CD8-positive, alpha-beta memory T cell (primary cell): ENCODE measurements at regions of chr17 and their contacts with region 1.

Region 1: GRCh38 chr17:7021993-7022778 is 664 bp upstream of the BCL6B start:
- DNase-seq: peak; percentile 71 to 81 (median 74)
- H3K4me3 ChIP-seq: peak overlapping the region; percentile 42
- H3K4me3 Mint-ChIP-seq: peak overlapping the region; percentile 37 to 75 (median 57)
- H3K27ac ChIP-seq: no peak overlapping the region
- H3K27ac Mint-ChIP-seq: peak overlapping the region; percentile 19 to 95 (median 88)
- H3K4me1 ChIP-seq: peaks cover 33% of the 10 kb centered on the region
- H3K4me1 Mint-ChIP-seq: peaks cover 45 to 53% (median 47%) of the 10 kb centered on the region in 3 donors
- H3K27me3 ChIP-seq: no peaks in the 10 kb centered on the region
- H3K27me3 Mint-ChIP-seq: peaks cover 0 to 5% of the 10 kb centered on the region in 2 donors

Region 2: GRCh38 chr17:6843241-6843880 is 178.8 kb before region 1 on chr17:
- CTCF ChIA-PET with region 1: interaction called, 12 read pairs
- POLR2A ChIA-PET with region 1: no interaction called
- DNase-seq: peak in 2 of 5 donors; percentile 19 to 22
- H3K4me3 ChIP-seq: no peak overlapping the region
- H3K4me3 Mint-ChIP-seq: no peak overlapping the region
- H3K27ac ChIP-seq: no peak overlapping the region
- H3K27ac Mint-ChIP-seq: no peak overlapping the region
- H3K4me1 ChIP-seq: no peaks in the 10 kb centered on the region
- H3K4me1 Mint-ChIP-seq: peaks cover 0 to 11% (median 3%) of the 10 kb centered on the region in 3 donors
- H3K27me3 ChIP-seq: no peaks in the 10 kb centered on the region
- H3K27me3 Mint-ChIP-seq: peaks cover 30 to 61% of the 10 kb centered on the region in 2 donors

Region 3: GRCh38 chr17:6913608-6914443 is 108.4 kb before region 1 on chr17:
- CTCF ChIA-PET with region 1: interaction called, 51 read pairs
- POLR2A ChIA-PET with region 1: interaction called, 8 read pairs
- DNase-seq: peak; percentile 52 to 84 (median 68)
- H3K4me3 ChIP-seq: peak overlapping the region; percentile 60
- H3K4me3 Mint-ChIP-seq: peak overlapping the region in 6 of 7 donors; percentile 74 to 94 (median 84)
- H3K27ac ChIP-seq: no peak overlapping the region
- H3K27ac Mint-ChIP-seq: peak overlapping the region in 5 of 8 donors; percentile 5 to 93 (median 77)
- H3K4me1 ChIP-seq: peaks cover 5% of the 10 kb centered on the region
- H3K4me1 Mint-ChIP-seq: peaks cover 8 to 15% (median 13%) of the 10 kb centered on the region in 3 donors
- H3K27me3 ChIP-seq: no peaks in the 10 kb centered on the region
- H3K27me3 Mint-ChIP-seq: peaks cover 4 to 15% of the 10 kb centered on the region in 2 donors

Region 4: GRCh38 chr17:7004398-7005253 is 17.6 kb before region 1 on chr17:
- CTCF ChIA-PET with region 1: interaction called, 23 read pairs
- POLR2A ChIA-PET with region 1: no interaction called
- DNase-seq: peak in 2 of 5 donors; percentile 69 to 76
- H3K4me3 ChIP-seq: no peak overlapping the region
- H3K4me3 Mint-ChIP-seq: peak overlapping the region in 1 of 7 donors; percentile 18
- H3K27ac ChIP-seq: no peak overlapping the region
- H3K27ac Mint-ChIP-seq: peak overlapping the region in 7 of 8 donors; percentile 7 to 88 (median 67)
- H3K4me1 ChIP-seq: peaks cover 3% of the 10 kb centered on the region
- H3K4me1 Mint-ChIP-seq: peaks cover 25 to 39% (median 36%) of the 10 kb centered on the region in 3 donors
- H3K27me3 ChIP-seq: no peaks in the 10 kb centered on the region
- H3K27me3 Mint-ChIP-seq: peaks cover 0 to 1% of the 10 kb centered on the region in 2 donors

Region 5: GRCh38 chr17:7035591-7036368 is 13.6 kb after region 1 on chr17 and contains the start of gene SLC16A13:
- CTCF ChIA-PET with region 1: interaction called, 9 read pairs
- POLR2A ChIA-PET with region 1: interaction called, 17 read pairs
- DNase-seq: peak; percentile 96 to 99 (median 98)
- H3K4me3 ChIP-seq: peak within 1 kb of the TSS; percentile 99
- H3K4me3 Mint-ChIP-seq: peak within 1 kb of the TSS; percentile 86 to 98 (median 94)
- H3K27ac ChIP-seq: peak within 1 kb of the TSS; percentile 98
- H3K27ac Mint-ChIP-seq: peak within 1 kb of the TSS; percentile 95 to 99 (median 98)
- H3K4me1 ChIP-seq: peaks cover 52% of the 10 kb centered on the region
- H3K4me1 Mint-ChIP-seq: peaks cover 45 to 65% (median 52%) of the 10 kb centered on the region in 3 donors
- H3K27me3 ChIP-seq: no peaks in the 10 kb centered on the region
- H3K27me3 Mint-ChIP-seq: no peaks in the 10 kb centered on the region
- total RNA-seq, gene SLC16A13: 7.7 to 8.1 TPM

Region 6: DNA sequence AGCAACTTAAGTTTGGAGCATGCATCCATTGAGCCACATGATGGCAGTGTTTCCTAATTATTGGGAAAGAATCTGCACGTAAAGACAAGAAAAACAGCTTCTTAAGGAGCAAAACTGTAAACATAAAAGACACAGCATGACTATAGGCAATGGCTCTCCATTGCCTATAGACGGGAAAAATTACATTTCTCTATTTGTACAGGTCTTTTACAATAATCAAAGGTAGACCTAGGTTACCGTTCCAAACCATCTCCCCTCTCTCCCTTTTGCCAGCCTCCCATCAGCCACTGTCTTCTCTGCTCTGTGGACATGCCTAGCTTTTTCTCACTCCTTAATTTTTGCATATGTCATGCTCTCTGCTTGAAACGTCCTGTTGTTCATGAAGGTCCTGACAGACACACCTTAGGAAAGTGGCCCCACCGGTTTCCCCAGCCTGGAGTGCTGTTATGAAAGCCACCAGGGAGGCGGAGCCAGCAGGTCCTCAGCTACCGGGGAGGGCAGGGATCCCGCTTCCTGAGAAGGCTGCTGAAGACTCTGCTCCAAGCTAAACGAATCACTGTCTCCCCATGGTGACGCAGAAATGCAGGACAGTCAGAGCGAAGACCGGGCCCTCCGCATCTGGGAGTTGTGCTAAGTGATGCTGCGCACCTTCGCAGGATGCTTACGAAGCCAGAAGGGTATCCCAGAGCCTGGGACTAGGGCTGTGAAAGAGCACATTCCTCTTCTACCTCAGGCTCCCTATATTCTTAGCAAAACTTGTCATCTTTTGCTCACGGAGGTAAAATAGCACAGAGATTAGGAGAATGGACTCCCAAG is 23.9 kb after region 1 on chr17:
- CTCF ChIA-PET with region 1: interaction called, 12 read pairs
- POLR2A ChIA-PET with region 1: interaction called, 7 read pairs
- DNase-seq: peak; percentile 25 to 66 (median 64)
- H3K4me3 ChIP-seq: peak overlapping the region; percentile 67
- H3K4me3 Mint-ChIP-seq: peak overlapping the region; percentile 78 to 93 (median 87)
- H3K27ac ChIP-seq: peak overlapping the region; percentile 53
- H3K27ac Mint-ChIP-seq: peak overlapping the region; percentile 83 to 96 (median 94)
- H3K4me1 ChIP-seq: peaks cover 30% of the 10 kb centered on the region
- H3K4me1 Mint-ChIP-seq: peaks cover 32 to 47% (median 33%) of the 10 kb centered on the region in 3 donors
- H3K27me3 ChIP-seq: no peaks in the 10 kb centered on the region
- H3K27me3 Mint-ChIP-seq: no peaks in the 10 kb centered on the region